Activated B cell treated with CpG ODN at 0.5 μM for 24 hours (primary cell): ENCODE measurements at regions of chr4 and their contacts with region 1.

Region 1: DNA sequence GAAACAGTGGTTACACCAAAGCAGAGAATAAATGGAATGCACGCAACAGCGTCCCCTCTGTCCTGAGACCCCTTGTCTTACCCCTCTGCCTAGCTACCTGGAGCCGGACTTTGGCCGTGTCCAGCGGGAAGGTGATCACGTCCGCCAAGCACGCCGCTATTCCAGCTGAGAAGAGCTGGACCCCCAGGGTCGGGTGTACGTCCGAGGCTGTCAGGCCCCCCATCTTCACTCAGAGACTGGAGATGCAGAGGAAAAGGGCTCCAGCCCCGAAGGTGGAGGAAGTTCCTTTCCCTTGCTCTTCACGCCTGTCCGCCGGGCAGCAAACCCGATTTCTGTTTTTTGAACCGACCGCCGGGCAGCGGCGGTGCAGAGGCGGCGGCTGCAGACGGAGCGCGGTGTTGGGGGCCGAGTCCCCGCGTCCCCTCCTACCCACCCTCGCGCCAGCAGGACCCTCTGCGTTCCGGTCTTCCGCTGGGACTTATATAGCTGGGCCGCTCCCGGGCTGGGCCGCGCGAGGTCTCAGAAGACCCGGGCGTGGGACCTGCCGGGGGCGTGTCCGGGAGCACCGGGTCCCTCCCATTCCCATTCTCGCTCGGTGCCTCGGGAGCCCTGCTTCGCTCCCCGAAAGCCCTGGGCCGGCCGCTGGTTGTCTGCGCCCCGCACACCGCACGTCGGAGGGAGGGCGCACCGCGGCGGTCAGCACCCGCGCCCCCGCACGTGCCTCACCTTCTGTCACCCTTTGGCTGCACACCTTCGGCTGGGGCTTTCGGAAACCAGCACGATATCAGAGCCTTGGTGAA is at the start of gene UCP1:
- DNase-seq: peak; percentile 24
- ATAC-seq: peak; percentile 52
- H3K4me3 Mint-ChIP-seq: peak within 1 kb of the TSS; percentile 81
- H3K27ac Mint-ChIP-seq: no peak within 1 kb of the TSS
- H3K4me1 Mint-ChIP-seq: peaks cover 23% of the 10 kb centered on the region
- H3K27me3 Mint-ChIP-seq: peaks cover 38% of the 10 kb centered on the region
- CTCF ChIP-seq: no peak
- total RNA-seq, gene UCP1: not detected in 2 replicates

Region 2: DNA sequence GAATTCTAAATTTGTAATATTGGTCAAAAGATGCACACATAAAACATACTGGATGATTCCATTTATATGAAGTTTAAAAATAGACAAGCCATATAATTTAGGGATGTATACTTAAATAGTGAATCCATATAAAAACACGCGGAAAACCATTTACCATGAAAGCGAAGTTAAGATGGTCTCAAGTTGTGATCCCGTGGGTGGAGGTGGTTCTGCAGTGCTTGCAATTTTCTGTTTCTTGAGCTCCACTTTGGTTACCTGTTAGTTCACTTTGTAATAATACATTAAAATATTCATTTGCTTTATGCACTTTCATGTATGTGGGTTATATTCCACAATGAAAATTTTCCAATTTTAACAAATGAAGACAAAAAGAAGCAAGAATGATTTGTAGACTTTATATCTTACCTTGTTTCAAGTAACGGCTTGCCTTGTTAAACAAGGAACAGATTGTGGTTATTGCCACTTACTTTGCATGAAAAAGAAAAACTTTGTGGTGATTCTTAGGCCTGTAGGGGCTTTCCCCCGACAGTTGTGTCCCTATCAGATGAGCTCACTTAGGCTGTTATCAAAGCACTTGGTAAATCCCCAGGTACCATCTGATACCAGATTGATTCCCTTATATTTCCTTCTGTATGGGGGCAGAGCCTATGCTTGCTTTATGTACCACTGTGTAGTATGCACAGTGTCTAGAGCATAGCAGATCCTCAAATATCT is 12.2 kb before region 1 on chr4:
- CTCF ChIA-PET with region 1: no interaction called
- POLR2A ChIA-PET with region 1: interaction called, 10 read pairs
- intact Hi-C with region 1: loop called (anchors 1 kb)
- DNase-seq: no peak
- ATAC-seq: peak; percentile 96
- H3K4me3 Mint-ChIP-seq: peak overlapping the region; percentile 44
- H3K27ac Mint-ChIP-seq: no peak overlapping the region
- H3K4me1 Mint-ChIP-seq: peaks cover 18% of the 10 kb centered on the region
- H3K27me3 Mint-ChIP-seq: peaks cover 21% of the 10 kb centered on the region
- CTCF ChIP-seq: no peak